Heart left ventricle (tissue), 16 donors: ENCODE measurements at regions of chr15 and their contacts with region 1.

Region 1: GRCh38 chr15:68229386-68230156 is at the start of gene CLN6:
- DNase-seq: peak; percentile 82 to 91 (median 85)
- ATAC-seq: peak; percentile 78 to 98 (median 94)
- H3K4me3 ChIP-seq: peak within 1 kb of the TSS; percentile 78 to 99 (median 93)
- H3K27ac ChIP-seq: peak within 1 kb of the TSS in 11 of 12 donors; percentile 61 to 90 (median 78)
- H3K4me1 ChIP-seq: peaks cover 0 to 42% (median 14%) of the 10 kb centered on the region in 12 donors
- H3K27me3 ChIP-seq: no peaks in the 10 kb centered on the region
- CTCF ChIP-seq: peak in 2 of 12 donors; percentile 5 to 11
- POLR2A ChIP-seq: peak in 1 of 2 donors; percentile 56
- total RNA-seq, gene CLN6: 5.6 to 24.1 (median 8.9) TPM

Region 2: GRCh38 chr15:68012911-68013310 is 216.7 kb before region 1 on chr15:
- intact Hi-C with region 1: no loop called
- DNase-seq: no peak
- ATAC-seq: no peak
- H3K4me3 ChIP-seq: no peak overlapping the region
- H3K27ac ChIP-seq: no peak overlapping the region
- H3K4me1 ChIP-seq: peaks cover 0 to 16% (median 0%) of the 10 kb centered on the region in 12 donors
- H3K27me3 ChIP-seq: no peaks in the 10 kb centered on the region
- CTCF ChIP-seq: no peak
- POLR2A ChIP-seq: no peak

Region 3: DNA sequence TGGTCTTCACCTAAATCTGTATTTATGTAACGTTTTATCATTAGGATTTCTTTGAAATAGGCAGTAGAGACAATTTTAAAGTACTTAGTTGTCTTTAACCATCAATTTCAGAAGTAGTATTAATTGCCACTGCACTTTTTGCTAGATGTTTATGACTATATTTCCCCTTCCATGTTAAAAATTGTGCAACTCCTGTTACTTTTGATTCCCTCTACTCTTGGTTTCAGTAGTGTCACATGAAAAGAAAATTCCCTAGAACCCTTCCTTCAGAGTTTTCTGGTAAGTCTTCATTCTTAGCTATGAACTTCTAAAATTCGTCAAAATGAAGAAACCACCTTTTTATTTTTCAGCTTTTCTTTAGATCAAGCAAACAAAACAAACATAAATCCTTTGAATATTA is 168.4 kb before region 1 on chr15:
- intact Hi-C with region 1: no loop called
- DNase-seq: no peak
- ATAC-seq: no peak
- H3K4me3 ChIP-seq: no peak overlapping the region
- H3K27ac ChIP-seq: peak overlapping the region in 1 of 12 donors; percentile 32
- H3K4me1 ChIP-seq: peaks cover 0 to 76% (median 49%) of the 10 kb centered on the region in 12 donors
- H3K27me3 ChIP-seq: no peaks in the 10 kb centered on the region
- CTCF ChIP-seq: no peak
- POLR2A ChIP-seq: no peak

Region 4: GRCh38 chr15:68163191-68163590 is 66.4 kb before region 1 on chr15:
- intact Hi-C with region 1: loop called in 1 of 10 experiments (anchors 10 kb)
- DNase-seq: no peak
- ATAC-seq: no peak
- H3K4me3 ChIP-seq: no peak overlapping the region
- H3K27ac ChIP-seq: no peak overlapping the region
- H3K4me1 ChIP-seq: peaks cover 0 to under 1% (median 0%) of the 10 kb centered on the region in 12 donors
- H3K27me3 ChIP-seq: no peaks in the 10 kb centered on the region
- CTCF ChIP-seq: no peak
- POLR2A ChIP-seq: no peak